ENCODE measurements at regions of chr12 and their contacts with region 1.

Region 1: DNA sequence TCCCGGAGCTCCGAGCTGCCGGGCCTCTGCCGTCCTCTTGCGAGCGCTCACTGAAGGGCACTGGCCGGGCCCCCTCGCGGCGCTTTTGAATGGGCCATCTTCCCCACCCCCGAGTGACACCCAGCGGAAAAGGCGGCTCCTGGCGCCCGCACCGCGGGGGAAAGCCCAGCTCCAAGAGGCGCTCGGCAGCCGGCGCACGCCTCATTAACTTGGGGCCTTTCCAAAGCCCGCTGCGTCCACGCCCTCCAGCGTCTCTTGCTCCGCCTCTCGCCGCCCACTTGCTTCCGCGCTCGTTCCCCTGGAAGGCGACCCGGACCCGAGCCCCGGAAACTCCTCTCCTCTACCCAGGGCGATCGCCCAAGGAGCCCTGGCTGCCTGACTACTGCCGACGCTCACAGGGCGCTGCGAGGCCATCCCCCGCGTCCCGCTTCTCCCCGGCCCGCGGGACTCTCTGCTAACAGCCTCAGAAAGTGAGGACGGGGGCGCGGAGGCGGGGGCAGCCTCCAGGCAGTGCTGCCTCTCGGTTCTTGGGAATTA is at the start of gene PHLDA1:
- DNase-seq: peak; percentile 98
- ATAC-seq: peak; percentile 86
- H3K4me3 Mint-ChIP-seq: peak within 1 kb of the TSS; percentile 97
- H3K27ac Mint-ChIP-seq: peak within 1 kb of the TSS; percentile 98
- H3K4me1 Mint-ChIP-seq: peaks cover 42% of the 10 kb centered on the region
- H3K27me3 Mint-ChIP-seq: no peaks in the 10 kb centered on the region
- CTCF ChIP-seq: peak; percentile 68
- total RNA-seq, gene PHLDA1: 33.9 to 35.0 TPM

Region 2: GRCh38 chr12:75334384-75335030 is 697.1 kb before region 1 on chr12 and contains the start of gene GLIPR1L1:
- CTCF ChIA-PET with region 1: no interaction called
- POLR2A ChIA-PET with region 1: no interaction called
- intact Hi-C with region 1: loop called (anchors 10 kb)
- DNase-seq: peak; percentile 92
- ATAC-seq: peak; percentile 72
- H3K4me3 Mint-ChIP-seq: peak within 1 kb of the TSS; percentile 65
- H3K27ac Mint-ChIP-seq: no peak within 1 kb of the TSS
- H3K4me1 Mint-ChIP-seq: peaks cover 26% of the 10 kb centered on the region
- H3K27me3 Mint-ChIP-seq: peaks cover 27% of the 10 kb centered on the region
- CTCF ChIP-seq: peak; percentile 80
- total RNA-seq, gene GLIPR1L1: not detected

Region 3: GRCh38 chr12:75526655-75527511 is 504.7 kb before region 1 on chr12:
- CTCF ChIA-PET with region 1: interaction called, 27 read pairs
- POLR2A ChIA-PET with region 1: interaction called, 3 read pairs
- intact Hi-C with region 1: loop called (anchors 2 kb)
- DNase-seq: peak; percentile 39
- ATAC-seq: peak; percentile 66
- H3K4me3 Mint-ChIP-seq: no peak overlapping the region
- H3K27ac Mint-ChIP-seq: no peak overlapping the region
- H3K4me1 Mint-ChIP-seq: peaks cover 8% of the 10 kb centered on the region
- H3K27me3 Mint-ChIP-seq: peaks cover 28% of the 10 kb centered on the region
- CTCF ChIP-seq: peak; percentile 61

Region 4: DNA sequence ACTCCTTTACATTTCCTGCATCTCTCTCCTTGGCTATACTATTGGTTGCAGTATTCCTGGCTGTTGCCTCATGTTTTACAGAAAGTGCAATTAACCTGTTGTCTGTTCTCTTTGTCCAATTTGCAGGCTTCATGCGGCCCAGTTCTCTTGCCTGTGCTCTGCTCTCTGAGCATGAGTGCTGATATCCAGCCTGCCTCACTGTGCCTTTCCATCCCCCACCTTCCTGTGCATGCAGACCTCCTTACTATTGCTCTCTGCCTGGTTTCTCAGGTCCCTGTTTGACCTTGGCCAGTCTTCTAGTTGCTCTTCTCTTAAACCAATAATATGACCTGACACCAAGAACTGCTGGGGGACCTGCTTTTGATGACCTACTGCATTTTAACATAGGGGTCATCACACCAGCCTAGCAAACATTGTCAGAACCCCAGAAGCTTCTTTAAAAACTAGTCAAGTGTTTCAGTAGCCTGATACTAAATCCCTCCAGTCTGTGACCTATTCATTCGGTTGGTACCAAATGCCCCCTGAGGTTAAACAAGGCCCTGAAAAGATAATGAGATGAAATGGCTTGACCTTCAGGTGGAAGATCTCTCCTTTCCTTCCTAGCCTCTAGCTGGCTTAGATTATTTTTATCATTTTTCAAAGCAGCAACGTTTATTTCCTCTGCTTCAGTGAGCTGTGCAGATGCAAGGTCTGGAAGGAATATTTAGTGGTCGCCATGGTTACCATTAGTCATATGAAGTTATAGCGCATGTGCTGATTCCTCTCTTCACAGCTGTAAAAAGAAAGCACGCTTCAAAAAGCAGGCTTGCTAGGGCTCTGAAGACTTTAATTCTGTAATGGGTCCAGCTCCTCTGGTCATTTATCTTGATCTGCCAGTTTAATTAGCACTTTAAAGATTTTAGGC is 216.5 kb before region 1 on chr12:
- CTCF ChIA-PET with region 1: interaction called, 19 read pairs
- POLR2A ChIA-PET with region 1: interaction called, 6 read pairs
- intact Hi-C with region 1: loop called (anchors 5 kb)
- DNase-seq: peak; percentile 17
- ATAC-seq: peak; percentile 61
- H3K4me3 Mint-ChIP-seq: no peak overlapping the region
- H3K27ac Mint-ChIP-seq: peak overlapping the region; percentile 12
- H3K4me1 Mint-ChIP-seq: peaks cover 16% of the 10 kb centered on the region
- H3K27me3 Mint-ChIP-seq: peaks cover 3% of the 10 kb centered on the region
- CTCF ChIP-seq: no peak

Region 5: DNA sequence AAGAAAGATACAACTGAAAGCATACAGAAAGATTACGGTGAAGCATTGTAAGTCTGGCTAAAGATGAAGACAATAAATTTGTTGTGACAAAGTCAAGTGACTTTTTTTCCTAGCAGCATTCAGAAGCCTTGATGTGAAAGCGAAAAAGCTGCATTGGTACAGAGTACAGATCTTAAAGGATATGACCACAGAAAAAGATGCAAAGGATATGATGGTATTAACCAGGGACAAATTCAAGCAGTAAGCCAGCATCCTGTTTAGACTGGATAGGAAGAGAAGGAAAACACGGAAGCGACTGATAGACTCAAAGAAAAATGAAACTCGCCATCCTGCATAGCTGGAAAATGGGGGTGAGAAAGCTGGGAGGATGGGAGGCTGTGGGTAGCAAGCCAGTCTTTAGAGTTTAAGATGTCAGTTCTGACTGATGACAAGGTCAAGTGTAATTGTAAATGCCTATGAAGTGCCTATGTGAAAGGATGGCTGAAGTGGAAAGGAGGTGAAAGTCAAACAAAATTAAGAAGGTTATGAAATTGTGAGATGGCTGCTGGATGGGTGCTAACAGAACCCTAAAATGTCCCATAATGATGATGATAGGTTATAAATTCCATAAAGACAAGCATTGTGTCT is 92.5 kb before region 1 on chr12:
- CTCF ChIA-PET with region 1: interaction called, 17 read pairs
- POLR2A ChIA-PET with region 1: interaction called, 33 read pairs
- intact Hi-C with region 1: no loop called
- DNase-seq: no peak
- ATAC-seq: peak; percentile 40
- H3K4me3 Mint-ChIP-seq: no peak overlapping the region
- H3K27ac Mint-ChIP-seq: no peak overlapping the region
- H3K4me1 Mint-ChIP-seq: peaks cover 21% of the 10 kb centered on the region
- H3K27me3 Mint-ChIP-seq: no peaks in the 10 kb centered on the region
- CTCF ChIP-seq: no peak

Region 6: DNA sequence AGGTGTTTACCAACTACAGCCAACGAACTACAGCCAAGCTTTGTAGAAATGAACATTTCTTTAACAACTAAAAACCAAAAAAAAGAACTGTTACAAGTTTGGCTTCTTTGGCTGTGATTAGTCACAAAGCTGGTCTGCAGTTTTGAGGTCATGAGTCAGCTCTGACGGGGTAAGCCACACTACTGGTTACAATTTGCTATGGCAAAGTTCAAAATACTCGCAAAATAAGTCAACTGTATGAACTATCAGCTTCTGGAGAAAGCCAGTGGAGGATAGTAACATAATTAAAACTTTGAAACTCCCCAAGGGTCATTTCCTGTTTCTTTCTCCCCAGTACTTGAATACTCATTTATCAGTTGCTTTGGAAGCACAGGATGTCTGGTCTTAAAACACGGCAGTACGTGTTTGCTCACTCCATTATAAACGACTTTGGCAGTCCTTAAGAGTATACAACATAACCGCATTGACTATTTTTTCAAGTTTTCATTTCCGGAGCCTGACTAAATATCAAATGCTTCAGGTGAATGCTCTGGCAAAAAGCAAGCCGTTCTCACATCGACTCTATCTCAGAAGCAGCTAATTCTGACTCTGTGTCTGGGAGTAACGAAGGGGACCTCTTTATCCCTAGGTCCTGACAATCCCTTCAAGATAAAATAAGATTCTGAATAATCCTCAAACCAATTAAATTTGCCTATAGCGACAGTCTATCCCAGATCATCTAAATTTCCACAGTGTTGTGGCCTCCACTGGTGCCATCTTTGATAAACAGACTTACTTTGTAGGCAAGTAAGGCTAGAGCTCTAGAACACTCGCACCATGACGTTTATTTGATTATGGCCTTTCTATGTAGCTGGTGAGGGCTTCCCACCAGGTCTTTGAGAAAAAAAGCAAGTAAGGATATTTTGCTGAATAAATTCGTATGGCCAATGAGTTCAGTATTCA is 10.6 kb before region 1 on chr12:
- CTCF ChIA-PET with region 1: interaction called, 28 read pairs
- POLR2A ChIA-PET with region 1: interaction called, 75 read pairs
- intact Hi-C with region 1: no loop called
- DNase-seq: peak; percentile 92
- ATAC-seq: peak; percentile 80
- H3K4me3 Mint-ChIP-seq: peak overlapping the region; percentile 54
- H3K27ac Mint-ChIP-seq: peak overlapping the region; percentile 99
- H3K4me1 Mint-ChIP-seq: peaks cover 62% of the 10 kb centered on the region
- H3K27me3 Mint-ChIP-seq: no peaks in the 10 kb centered on the region
- CTCF ChIP-seq: no peak